ENCODE measurements at regions of chr10 and their contacts with region 1.

Region 1: GRCh38 chr10:17075533-17076359 is 53.9 kb downstream of the CUBN start:
- DNase-seq: peak; percentile 81
- ATAC-seq: peak; percentile 93
- H3K4me3 ChIP-seq: no peak overlapping the region
- H3K27ac ChIP-seq: peak overlapping the region; percentile 86
- H3K4me1 ChIP-seq: peaks cover 32% of the 10 kb centered on the region
- H3K27me3 ChIP-seq: no peaks in the 10 kb centered on the region
- CTCF ChIP-seq: no peak

Region 2: DNA sequence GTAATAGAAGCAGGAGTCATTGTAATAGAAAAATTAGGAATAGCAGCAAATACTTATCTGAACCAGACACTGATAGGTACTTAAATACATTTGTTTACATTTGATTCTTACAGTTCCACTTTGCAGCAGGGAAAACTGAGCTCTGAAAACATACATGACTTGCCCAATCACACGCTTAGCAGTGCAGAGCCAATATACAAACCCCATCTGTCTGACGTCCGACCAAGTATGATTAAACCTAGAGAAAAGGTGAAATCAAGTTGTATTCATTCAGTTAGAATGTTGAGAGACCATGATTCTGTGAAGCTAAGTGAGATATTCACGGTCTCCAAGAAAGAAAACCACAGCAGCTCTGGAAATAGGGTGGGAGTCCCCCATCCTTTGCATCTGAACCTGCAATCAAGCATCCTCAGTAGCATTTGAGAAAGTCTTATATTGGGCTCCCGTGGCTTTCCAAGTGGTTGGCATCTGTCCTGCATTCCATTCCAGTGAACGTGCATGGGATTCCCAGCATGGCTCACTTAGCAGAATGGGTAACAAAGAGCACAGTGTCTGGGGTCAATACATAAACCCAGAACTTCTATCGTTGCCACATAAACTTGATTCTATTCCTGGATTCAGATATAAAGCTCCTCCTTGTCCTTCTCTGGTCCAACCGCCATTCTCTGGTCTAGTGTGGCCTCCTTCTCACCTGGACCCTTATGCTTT is 109.9 kb before region 1 on chr10:
- CTCF ChIA-PET with region 1: no interaction called
- POLR2A ChIA-PET with region 1: no interaction called
- intact Hi-C with region 1: loop called (anchors 10 kb)
- DNase-seq: peak; percentile 91
- ATAC-seq: peak; percentile 90
- H3K4me3 ChIP-seq: no peak overlapping the region
- H3K27ac ChIP-seq: peak overlapping the region; percentile 89
- H3K4me1 ChIP-seq: peaks cover 33% of the 10 kb centered on the region
- H3K27me3 ChIP-seq: no peaks in the 10 kb centered on the region
- CTCF ChIP-seq: no peak

Region 3: DNA sequence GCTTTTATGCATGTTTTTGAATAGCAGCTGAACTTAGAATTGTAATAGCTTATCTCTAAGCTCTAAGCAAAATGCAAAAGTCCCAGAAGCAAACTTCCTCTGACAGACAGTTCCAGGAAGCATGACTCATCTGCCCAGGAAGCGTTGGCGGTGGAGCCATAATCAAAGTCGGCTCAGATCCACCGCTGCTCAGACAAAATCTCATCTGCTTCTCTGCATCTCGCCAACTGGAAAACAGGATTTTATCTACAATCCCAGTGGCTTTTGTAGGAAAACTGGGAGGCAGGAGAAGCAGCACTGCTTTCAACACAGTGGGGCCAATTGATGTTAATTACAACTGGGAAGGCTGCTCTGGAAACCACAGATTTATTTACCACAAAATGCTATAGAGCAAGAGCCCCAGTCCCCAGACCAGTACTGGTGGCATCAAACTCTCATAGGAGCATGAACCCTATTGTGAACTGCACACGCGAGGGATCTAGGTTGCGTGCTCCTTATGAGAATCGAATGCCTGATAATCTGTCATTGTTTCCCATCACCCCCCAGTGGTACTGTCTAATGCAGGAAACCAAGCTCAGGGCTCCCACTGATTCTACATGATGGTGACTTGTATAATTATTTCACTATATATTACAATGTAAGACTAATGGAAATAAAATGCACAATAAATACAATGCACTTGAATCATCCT is 46.0 kb before region 1 on chr10:
- CTCF ChIA-PET with region 1: no interaction called
- POLR2A ChIA-PET with region 1: interaction called, 3 read pairs
- intact Hi-C with region 1: loop called (anchors 5 kb)
- DNase-seq: peak; percentile 68
- ATAC-seq: peak; percentile 70
- H3K4me3 ChIP-seq: peak overlapping the region; percentile 48; the same call in 1 of the 2 replicates
- H3K27ac ChIP-seq: peak overlapping the region; percentile 94
- H3K4me1 ChIP-seq: peaks cover 38% of the 10 kb centered on the region
- H3K27me3 ChIP-seq: no peaks in the 10 kb centered on the region
- CTCF ChIP-seq: no peak

Region 4: DNA sequence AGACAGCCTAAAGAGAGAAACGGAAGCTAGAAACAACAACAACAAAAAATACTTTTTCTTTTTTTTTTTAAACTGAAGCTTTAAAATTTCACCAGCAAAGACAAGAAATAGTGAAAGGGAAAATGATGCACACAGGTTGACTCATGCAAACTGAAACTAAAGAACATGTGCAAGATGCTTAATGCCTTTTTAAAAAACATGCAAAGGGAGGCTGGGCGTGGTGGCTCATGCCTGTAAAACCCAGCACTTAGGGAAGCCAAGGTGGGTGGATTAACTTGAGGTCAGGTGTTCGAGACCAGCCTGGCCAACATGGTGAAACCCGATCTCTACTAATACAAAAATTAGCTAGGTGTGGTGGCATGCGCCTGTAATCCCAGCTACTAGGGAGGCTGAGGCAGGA is 69.0 kb after region 1 on chr10:
- CTCF ChIA-PET with region 1: no interaction called
- POLR2A ChIA-PET with region 1: interaction called, 29 read pairs
- intact Hi-C with region 1: no loop called
- DNase-seq: peak; percentile 9
- ATAC-seq: no peak; the same call in 1 of the 2 replicates
- H3K4me3 ChIP-seq: no peak overlapping the region
- H3K27ac ChIP-seq: peak overlapping the region; percentile 28; the same call in 1 of the 2 replicates
- H3K4me1 ChIP-seq: no peaks in the 10 kb centered on the region
- H3K27me3 ChIP-seq: no peaks in the 10 kb centered on the region
- CTCF ChIP-seq: no peak

Region 5: DNA sequence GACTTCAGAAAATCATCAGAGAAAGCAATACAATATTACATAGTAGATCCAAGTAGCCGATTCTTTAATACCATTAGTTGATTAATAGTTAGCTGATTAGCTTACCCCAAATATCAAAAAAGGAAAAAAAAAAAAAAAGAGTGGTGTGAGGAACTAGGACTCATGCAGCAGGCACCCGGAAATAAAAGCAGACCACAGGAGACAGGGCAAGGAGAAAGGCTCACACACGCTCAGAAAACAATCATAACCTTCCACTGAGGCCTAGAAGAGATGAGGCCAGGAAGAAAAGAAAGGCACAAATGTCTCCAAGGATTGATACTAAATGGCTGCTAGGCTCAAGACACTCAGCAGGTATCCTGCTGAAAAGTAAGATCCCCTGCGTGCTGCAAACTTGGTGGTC is 99.8 kb after region 1 on chr10:
- CTCF ChIA-PET with region 1: no interaction called
- POLR2A ChIA-PET with region 1: no interaction called
- intact Hi-C with region 1: loop called (anchors 10 kb)
- DNase-seq: no peak
- ATAC-seq: no peak
- H3K4me3 ChIP-seq: no peak overlapping the region
- H3K27ac ChIP-seq: no peak overlapping the region
- H3K4me1 ChIP-seq: no peaks in the 10 kb centered on the region
- H3K27me3 ChIP-seq: no peaks in the 10 kb centered on the region
- CTCF ChIP-seq: no peak

Region 6: DNA sequence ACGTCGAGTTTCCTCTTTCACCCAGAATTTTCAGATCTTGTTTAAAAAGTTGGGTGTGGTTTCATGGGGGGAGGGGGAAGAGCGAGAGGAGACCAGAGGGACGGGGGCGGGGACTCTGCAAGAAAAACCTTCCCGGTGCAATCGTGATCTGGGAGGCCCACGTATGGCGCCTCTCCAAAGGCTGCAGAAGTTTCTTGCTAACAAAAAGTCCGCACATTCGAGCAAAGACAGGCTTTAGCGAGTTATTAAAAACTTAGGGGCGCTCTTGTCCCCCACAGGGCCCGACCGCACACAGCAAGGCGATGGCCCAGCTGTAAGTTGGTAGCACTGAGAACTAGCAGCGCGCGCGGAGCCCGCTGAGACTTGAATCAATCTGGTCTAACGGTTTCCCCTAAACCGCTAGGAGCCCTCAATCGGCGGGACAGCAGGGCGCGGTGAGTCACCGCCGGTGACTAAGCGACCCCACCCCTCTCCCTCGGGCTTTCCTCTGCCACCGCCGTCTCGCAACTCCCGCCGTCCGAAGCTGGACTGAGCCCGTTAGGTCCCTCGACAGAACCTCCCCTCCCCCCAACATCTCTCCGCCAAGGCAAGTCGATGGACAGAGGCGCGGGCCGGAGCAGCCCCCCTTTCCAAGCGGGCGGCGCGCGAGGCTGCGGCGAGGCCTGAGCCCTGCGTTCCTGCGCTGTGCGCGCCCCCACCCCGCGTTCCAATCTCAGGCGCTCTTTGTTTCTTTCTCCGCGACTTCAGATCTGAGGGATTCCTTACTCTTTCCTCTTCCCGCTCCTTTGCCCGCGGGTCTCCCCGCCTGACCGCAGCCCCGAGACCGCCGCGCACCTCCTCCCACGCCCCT is 152.6 kb after region 1 on chr10 and contains the start of gene VIM:
- CTCF ChIA-PET with region 1: interaction called, 6 read pairs
- POLR2A ChIA-PET with region 1: no interaction called
- intact Hi-C with region 1: loop called (anchors 5 kb)
- DNase-seq: peak; percentile 82
- ATAC-seq: peak; percentile 66
- H3K4me3 ChIP-seq: peak within 1 kb of the TSS; percentile 87
- H3K27ac ChIP-seq: peak within 1 kb of the TSS; percentile 92
- H3K4me1 ChIP-seq: peaks cover 10% of the 10 kb centered on the region
- H3K27me3 ChIP-seq: no peaks in the 10 kb centered on the region
- CTCF ChIP-seq: no peak
- total RNA-seq, gene VIM: 469 and 506 TPM in 2 replicates

Measured in PC-3 (cell line).